Activated CD4-positive, alpha-beta T cell treated with anti-CD3 and anti-CD28 coated beads, Interleukin-2, amount 10 ng/mL, durations not matched to agents 24 days and 14 days (primary cell): ENCODE measurements at regions of chr1 and their contacts with region 1.

Region 1: GRCh38 chr1:76294482-76295194 is 220.1 kb downstream of the ST6GALNAC3 start:
- DNase-seq: peak; percentile 67
- H3K4me3 Mint-ChIP-seq: peak overlapping the region; percentile 54
- H3K27ac Mint-ChIP-seq: peak overlapping the region; percentile 35
- H3K4me1 Mint-ChIP-seq: peaks cover 41% of the 10 kb centered on the region
- H3K27me3 Mint-ChIP-seq: no peaks in the 10 kb centered on the region

Region 2: DNA sequence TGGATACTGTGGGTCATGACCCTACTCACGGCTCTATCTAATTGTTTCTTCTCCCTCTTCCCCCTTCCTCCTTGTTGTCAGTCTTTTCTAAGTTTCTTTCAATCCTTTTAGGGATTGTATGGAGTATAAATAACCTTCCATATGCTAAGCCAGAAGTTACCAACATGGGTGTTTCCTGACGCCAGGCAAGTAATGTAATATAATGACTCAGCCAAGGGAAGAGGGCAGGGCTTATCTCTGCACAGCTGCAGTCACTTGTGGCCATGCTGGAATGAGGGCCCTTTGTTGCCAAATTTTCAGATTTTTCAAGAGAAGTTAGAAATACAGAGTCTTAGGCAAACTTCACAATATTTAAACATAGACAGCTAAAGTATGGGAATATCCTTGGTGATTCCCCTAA is 25.5 kb before region 1 on chr1:
- intact Hi-C with region 1: loop called (anchors 1 kb)
- DNase-seq: peak; percentile 73
- H3K4me3 Mint-ChIP-seq: peak overlapping the region; percentile 55
- H3K27ac Mint-ChIP-seq: peak overlapping the region; percentile 82
- H3K4me1 Mint-ChIP-seq: peaks cover 57% of the 10 kb centered on the region
- H3K27me3 Mint-ChIP-seq: no peaks in the 10 kb centered on the region

Region 3: DNA sequence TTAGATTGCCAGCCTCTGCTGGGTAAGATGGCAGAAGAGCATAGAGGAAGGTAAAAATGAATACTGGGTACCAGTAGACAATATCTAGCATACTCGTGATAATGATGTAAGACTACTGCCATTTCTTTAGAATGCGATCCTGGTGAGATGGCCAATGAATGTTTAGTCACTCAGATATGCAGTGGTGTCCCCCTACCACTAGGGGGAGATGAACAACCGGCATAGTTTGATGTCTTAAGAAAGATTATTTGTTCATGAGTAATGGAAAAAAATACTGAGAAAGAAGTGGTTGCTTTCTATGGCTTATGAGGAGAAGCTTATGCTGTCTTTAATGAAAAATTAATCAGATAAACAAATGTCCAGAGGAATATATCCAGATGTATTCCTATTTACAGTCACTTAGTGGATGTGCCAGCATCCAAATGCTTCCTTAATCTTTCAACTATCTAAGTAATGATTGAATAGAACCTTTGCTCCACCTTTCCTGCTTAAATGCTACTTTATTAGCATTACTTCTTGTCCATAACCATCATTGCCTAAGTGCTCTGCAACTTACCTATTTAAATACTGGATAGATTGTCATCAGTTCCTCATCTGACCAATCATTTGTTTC is 36.5 kb after region 1 on chr1:
- intact Hi-C with region 1: no loop called
- DNase-seq: peak; percentile 79
- H3K4me3 Mint-ChIP-seq: no peak overlapping the region
- H3K27ac Mint-ChIP-seq: no peak overlapping the region
- H3K4me1 Mint-ChIP-seq: peaks cover 6% of the 10 kb centered on the region
- H3K27me3 Mint-ChIP-seq: peaks cover 4% of the 10 kb centered on the region

Region 4: GRCh38 chr1:76352741-76353435 is 58.2 kb after region 1 on chr1:
- intact Hi-C with region 1: no loop called
- DNase-seq: no peak
- H3K4me3 Mint-ChIP-seq: no peak overlapping the region
- H3K27ac Mint-ChIP-seq: no peak overlapping the region
- H3K4me1 Mint-ChIP-seq: no peaks in the 10 kb centered on the region
- H3K27me3 Mint-ChIP-seq: no peaks in the 10 kb centered on the region

Region 5: DNA sequence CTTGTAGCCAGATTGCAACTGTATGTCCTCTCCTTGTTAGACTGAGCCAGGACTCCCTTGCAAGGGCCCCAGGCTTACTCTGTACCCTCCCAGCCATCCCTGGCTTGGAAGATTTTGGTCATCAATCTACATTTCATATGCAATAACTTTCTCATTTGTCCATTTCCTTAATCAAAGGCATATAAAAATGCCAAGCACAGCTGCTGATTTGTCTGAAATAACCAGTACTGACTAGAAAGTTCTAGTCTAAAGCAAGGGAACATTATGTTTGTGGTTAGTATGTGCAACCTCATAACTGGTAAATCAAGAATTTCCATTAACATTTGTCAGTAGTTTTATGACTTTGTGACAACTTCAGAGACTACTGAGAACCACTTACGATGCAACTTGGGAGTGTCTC is 150.1 kb after region 1 on chr1:
- intact Hi-C with region 1: no loop called
- DNase-seq: no peak
- H3K4me3 Mint-ChIP-seq: no peak overlapping the region
- H3K27ac Mint-ChIP-seq: no peak overlapping the region
- H3K4me1 Mint-ChIP-seq: no peaks in the 10 kb centered on the region
- H3K27me3 Mint-ChIP-seq: no peaks in the 10 kb centered on the region